ENCODE measurements at regions of chr2 and their contacts with region 1.

Region 1: GRCh38 chr2:3536682-3537632 is 17.6 kb upstream of the ADI1 start:
- DNase-seq: peak; percentile 79 to 80
- ATAC-seq: peak; percentile 78
- H3K4me3 ChIP-seq: peak overlapping the region; percentile 8 to 35
- H3K27ac ChIP-seq: peak overlapping the region; percentile 97 to 98
- H3K4me1 ChIP-seq: no peaks in the 10 kb centered on the region
- H3K27me3 ChIP-seq: no peaks in the 10 kb centered on the region

Region 2: GRCh38 chr2:3493615-3494007 is 43.3 kb before region 1 on chr2:
- intact Hi-C with region 1: loop called in 1 of 2 experiments (anchors 5 kb)
- DNase-seq: peak; percentile 70 to 82
- ATAC-seq: peak; percentile 81
- H3K4me3 ChIP-seq: peak overlapping the region in 1 of 2 donors; percentile 10
- H3K27ac ChIP-seq: peak overlapping the region; percentile 28 to 91
- H3K4me1 ChIP-seq: no peaks in the 10 kb centered on the region
- H3K27me3 ChIP-seq: no peaks in the 10 kb centered on the region

Region 3: DNA sequence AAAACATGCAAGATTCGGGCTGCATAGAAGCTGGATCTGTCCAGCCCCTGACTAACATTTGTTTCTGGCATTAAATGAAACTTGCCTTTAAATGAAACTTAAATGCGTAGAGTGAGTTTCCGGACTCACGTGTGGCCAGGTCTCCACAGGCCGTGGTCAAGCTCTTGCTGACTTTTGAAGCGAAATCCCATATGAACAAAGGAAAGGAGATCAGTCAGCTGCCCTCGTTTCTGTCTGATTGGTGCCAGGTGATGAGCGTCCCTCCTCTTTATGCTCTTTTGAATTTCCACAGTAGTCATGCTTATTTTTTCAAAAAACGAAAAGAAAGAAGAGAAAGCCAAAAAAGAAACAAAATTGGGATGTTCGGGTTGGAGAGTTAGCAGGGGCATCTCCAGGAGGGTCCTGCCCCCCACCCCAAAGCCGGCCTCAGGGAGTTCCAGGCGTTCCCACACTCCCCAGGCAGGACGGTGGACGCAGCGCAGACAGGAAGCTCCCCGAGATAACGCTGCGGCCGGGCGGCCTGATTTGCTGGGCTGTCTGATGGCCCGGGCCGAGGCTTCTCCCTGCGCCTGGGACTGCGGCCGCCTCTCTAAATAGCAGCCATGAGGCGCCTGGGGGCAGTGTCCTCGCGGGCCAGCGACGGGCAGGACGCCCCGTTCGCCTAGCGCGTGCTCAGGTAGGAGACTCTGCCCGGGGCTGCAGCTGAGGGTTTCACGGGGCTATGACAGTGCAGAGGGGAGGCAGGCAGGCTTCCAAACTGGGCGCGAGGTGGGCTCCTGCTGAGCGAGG is 57.7 kb after region 1 on chr2 and contains the start of gene COLEC11:
- intact Hi-C with region 1: no loop called
- DNase-seq: peak in 1 of 2 donors; percentile 79
- ATAC-seq: peak; percentile 78
- H3K4me3 ChIP-seq: no peak within 1 kb of the TSS
- H3K27ac ChIP-seq: no peak within 1 kb of the TSS
- H3K4me1 ChIP-seq: no peaks in the 10 kb centered on the region
- H3K27me3 ChIP-seq: no peaks in the 10 kb centered on the region
- total RNA-seq, gene COLEC11: 1.4 to 1.7 TPM

Measured in aorta (tissue), 5 donors.